Breast epithelium (tissue), 4 donors: ENCODE measurements at regions of chr10 and their contacts with region 1.

Region 1: GRCh38 chr10:70872291-70872690 is 16.1 kb downstream of the PCBD1 start:
- DNase-seq: no peak
- H3K4me3 ChIP-seq: no peak overlapping the region
- H3K27ac ChIP-seq: no peak overlapping the region
- H3K4me1 ChIP-seq: no peaks in the 10 kb centered on the region
- H3K27me3 ChIP-seq: no peaks in the 10 kb centered on the region
- CTCF ChIP-seq: no peak
- POLR2A ChIP-seq: no peak

Region 2: GRCh38 chr10:70308121-70309060 is 563.9 kb before region 1 on chr10:
- intact Hi-C with region 1: no loop called
- DNase-seq: no peak
- H3K4me3 ChIP-seq: no peak overlapping the region
- H3K27ac ChIP-seq: no peak overlapping the region
- H3K4me1 ChIP-seq: no peaks in the 10 kb centered on the region
- H3K27me3 ChIP-seq: no peaks in the 10 kb centered on the region
- CTCF ChIP-seq: no peak
- POLR2A ChIP-seq: no peak

Region 3: GRCh38 chr10:70528726-70529362 is 343.4 kb before region 1 on chr10:
- intact Hi-C with region 1: loop called (anchors 2 kb)
- DNase-seq: no peak
- H3K4me3 ChIP-seq: no peak overlapping the region
- H3K27ac ChIP-seq: no peak overlapping the region
- H3K4me1 ChIP-seq: no peaks in the 10 kb centered on the region
- H3K27me3 ChIP-seq: no peaks in the 10 kb centered on the region
- CTCF ChIP-seq: no peak
- POLR2A ChIP-seq: no peak

Region 4: DNA sequence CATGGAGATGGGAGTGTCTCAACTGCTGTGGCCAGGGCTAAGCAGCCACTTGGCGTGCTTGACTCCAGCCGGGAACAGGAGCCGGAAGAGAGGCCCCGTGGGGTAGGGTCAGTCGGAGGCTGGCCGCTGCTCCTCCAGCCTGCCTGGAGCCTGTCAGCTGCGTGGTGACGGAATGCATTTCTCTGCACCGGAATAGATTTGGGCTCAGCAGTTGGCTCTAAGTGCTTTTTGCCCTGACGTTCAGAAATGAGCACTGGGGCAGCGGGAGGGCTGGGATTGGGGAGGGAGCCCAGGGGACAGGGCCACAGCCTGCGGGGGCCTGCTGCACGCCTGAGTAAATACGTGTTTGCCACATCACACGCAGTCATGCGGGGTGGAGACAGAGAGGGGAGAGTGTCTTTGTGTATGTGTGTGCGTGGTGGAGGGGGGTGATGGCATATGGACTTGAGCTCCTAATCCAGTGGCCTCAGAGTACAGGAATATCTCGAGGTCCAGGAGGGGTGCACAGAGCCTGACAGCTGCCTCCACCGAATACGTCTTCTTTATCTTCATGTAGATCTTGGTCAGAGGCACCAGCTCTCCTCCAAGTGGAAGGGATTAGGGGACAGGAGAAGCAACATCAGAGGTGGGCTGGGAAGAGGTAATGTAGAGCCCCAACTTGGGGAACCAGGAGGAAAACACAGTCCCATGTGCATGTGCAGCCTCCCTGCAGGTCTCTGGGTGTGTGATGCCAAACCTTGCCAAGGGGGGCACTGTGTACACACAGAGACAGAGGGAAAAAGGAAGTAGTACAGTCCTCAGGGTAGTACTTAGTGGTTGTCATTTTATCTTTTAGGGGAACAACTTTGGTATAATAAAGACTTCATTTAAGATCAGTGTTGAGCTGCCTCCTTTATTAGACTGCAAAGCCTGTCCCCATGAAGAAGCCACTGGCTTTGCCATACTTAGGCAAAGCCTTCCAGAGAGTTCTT is 675.9 kb after region 1 on chr10:
- intact Hi-C with region 1: no loop called
- DNase-seq: no peak
- H3K4me3 ChIP-seq: no peak overlapping the region
- H3K27ac ChIP-seq: peak overlapping the region in 1 of 2 donors; percentile 35
- H3K4me1 ChIP-seq: no peaks in the 10 kb centered on the region
- H3K27me3 ChIP-seq: no peaks in the 10 kb centered on the region
- CTCF ChIP-seq: no peak
- POLR2A ChIP-seq: no peak